ENCODE measurements at regions of chr3 and their contacts with region 1.

Region 1: GRCh38 chr3:194333212-194333980 is 17.7 kb downstream of the CPN2 start:
- DNase-seq: peak; percentile 86 to 92
- ATAC-seq: peak; percentile 93 to 97 (median 96)
- H3K4me3 ChIP-seq: no peak overlapping the region
- H3K4me3 Mint-ChIP-seq: peak overlapping the region; percentile 78
- H3K27ac ChIP-seq: no peak overlapping the region
- H3K27ac Mint-ChIP-seq: no peak overlapping the region
- H3K4me1 ChIP-seq: peaks cover 9% of the 10 kb centered on the region
- H3K4me1 Mint-ChIP-seq: peaks cover 4 to 10% of the 10 kb centered on the region in 2 donors
- H3K27me3 ChIP-seq: peaks cover 10% of the 10 kb centered on the region
- H3K27me3 Mint-ChIP-seq: peaks cover 28 to 31% of the 10 kb centered on the region in 2 donors
- CTCF ChIP-seq: peak; percentile 99

Region 2: GRCh38 chr3:194046995-194047645 is 286.3 kb before region 1 on chr3:
- intact Hi-C with region 1: no loop called
- DNase-seq: no peak
- ATAC-seq: no peak
- H3K4me3 ChIP-seq: no peak overlapping the region
- H3K4me3 Mint-ChIP-seq: no peak overlapping the region
- H3K27ac ChIP-seq: no peak overlapping the region
- H3K27ac Mint-ChIP-seq: no peak overlapping the region
- H3K4me1 ChIP-seq: peaks cover 8% of the 10 kb centered on the region
- H3K4me1 Mint-ChIP-seq: no peaks in the 10 kb centered on the region
- H3K27me3 ChIP-seq: no peaks in the 10 kb centered on the region
- H3K27me3 Mint-ChIP-seq: peaks cover 15 to 27% of the 10 kb centered on the region in 2 donors
- CTCF ChIP-seq: no peak

Region 3: GRCh38 chr3:194404365-194405140 is 71.2 kb after region 1 on chr3:
- intact Hi-C with region 1: loop called (anchors 1 kb)
- DNase-seq: peak in 1 of 2 donors; percentile 81
- ATAC-seq: peak in 2 of 3 donors; percentile 40 to 53
- H3K4me3 ChIP-seq: no peak overlapping the region
- H3K4me3 Mint-ChIP-seq: no peak overlapping the region
- H3K27ac ChIP-seq: no peak overlapping the region
- H3K27ac Mint-ChIP-seq: no peak overlapping the region
- H3K4me1 ChIP-seq: peaks cover 6% of the 10 kb centered on the region
- H3K4me1 Mint-ChIP-seq: peaks cover 5 to 6% of the 10 kb centered on the region in 2 donors
- H3K27me3 ChIP-seq: no peaks in the 10 kb centered on the region
- H3K27me3 Mint-ChIP-seq: no peaks in the 10 kb centered on the region
- CTCF ChIP-seq: peak; percentile 93

Region 4: GRCh38 chr3:194486540-194487288 is 153.3 kb after region 1 on chr3 and contains the start of gene ATP13A3:
- intact Hi-C with region 1: no loop called
- DNase-seq: peak; percentile 87 to 96
- ATAC-seq: peak; percentile 77 to 94 (median 82)
- H3K4me3 ChIP-seq: peak within 1 kb of the TSS; percentile 64
- H3K4me3 Mint-ChIP-seq: peak within 1 kb of the TSS; percentile 95
- H3K27ac ChIP-seq: peak within 1 kb of the TSS; percentile 87
- H3K27ac Mint-ChIP-seq: peak within 1 kb of the TSS; percentile 89 to 90
- H3K4me1 ChIP-seq: peaks cover 31% of the 10 kb centered on the region
- H3K4me1 Mint-ChIP-seq: peaks cover 34 to 40% of the 10 kb centered on the region in 2 donors
- H3K27me3 ChIP-seq: no peaks in the 10 kb centered on the region
- H3K27me3 Mint-ChIP-seq: no peaks in the 10 kb centered on the region
- CTCF ChIP-seq: no peak
- total RNA-seq, gene ATP13A3: 62.9 to 79.2 (median 64.2) TPM

Region 5: DNA sequence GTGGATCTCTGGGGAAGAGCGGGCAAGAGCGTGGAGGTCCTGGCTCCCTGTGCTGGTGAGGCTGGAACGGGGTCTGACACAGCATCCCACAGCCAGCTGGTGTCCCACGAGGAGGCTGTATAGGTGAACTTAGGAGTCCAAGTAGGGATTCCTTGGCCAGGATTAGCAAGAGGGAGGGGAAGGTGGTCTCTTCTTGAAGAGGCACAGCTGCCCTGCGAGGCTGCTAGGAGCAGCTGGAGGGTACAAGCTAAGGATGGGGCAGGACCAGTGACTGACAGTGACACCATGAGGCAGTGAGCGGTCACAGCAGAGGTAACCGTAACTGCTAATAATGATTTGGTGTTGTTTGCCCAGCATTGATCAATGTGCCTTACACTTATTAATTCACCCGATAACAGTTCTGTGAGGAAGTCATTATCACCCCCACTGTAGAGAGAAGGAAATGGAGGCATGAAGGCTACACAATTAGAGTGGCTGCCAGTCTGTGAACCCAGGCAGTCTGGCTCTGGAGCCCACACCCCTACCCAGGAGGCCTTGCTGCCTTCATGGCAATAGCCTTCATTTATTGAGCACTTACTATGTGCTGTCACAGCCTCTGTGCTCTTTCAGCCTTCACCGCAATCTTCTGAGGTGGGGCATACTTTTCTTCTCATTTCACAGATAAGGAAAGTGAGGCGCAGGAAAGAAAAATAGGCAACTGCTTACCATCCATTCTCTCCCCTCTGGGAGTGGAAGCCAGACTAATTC is 240.5 kb after region 1 on chr3:
- intact Hi-C with region 1: loop called (anchors 10 kb)
- DNase-seq: peak in 1 of 2 donors; percentile 63
- ATAC-seq: peak; percentile 69 to 93 (median 87)
- H3K4me3 ChIP-seq: no peak overlapping the region
- H3K4me3 Mint-ChIP-seq: no peak overlapping the region
- H3K27ac ChIP-seq: no peak overlapping the region
- H3K27ac Mint-ChIP-seq: no peak overlapping the region
- H3K4me1 ChIP-seq: no peaks in the 10 kb centered on the region
- H3K4me1 Mint-ChIP-seq: no peaks in the 10 kb centered on the region
- H3K27me3 ChIP-seq: no peaks in the 10 kb centered on the region
- H3K27me3 Mint-ChIP-seq: peaks cover 31 to 44% of the 10 kb centered on the region in 2 donors
- CTCF ChIP-seq: peak; percentile 32

Measured in natural killer cell (primary cell).